ENCODE measurements at regions of chr11 and their contacts with region 1.

Region 1: DNA sequence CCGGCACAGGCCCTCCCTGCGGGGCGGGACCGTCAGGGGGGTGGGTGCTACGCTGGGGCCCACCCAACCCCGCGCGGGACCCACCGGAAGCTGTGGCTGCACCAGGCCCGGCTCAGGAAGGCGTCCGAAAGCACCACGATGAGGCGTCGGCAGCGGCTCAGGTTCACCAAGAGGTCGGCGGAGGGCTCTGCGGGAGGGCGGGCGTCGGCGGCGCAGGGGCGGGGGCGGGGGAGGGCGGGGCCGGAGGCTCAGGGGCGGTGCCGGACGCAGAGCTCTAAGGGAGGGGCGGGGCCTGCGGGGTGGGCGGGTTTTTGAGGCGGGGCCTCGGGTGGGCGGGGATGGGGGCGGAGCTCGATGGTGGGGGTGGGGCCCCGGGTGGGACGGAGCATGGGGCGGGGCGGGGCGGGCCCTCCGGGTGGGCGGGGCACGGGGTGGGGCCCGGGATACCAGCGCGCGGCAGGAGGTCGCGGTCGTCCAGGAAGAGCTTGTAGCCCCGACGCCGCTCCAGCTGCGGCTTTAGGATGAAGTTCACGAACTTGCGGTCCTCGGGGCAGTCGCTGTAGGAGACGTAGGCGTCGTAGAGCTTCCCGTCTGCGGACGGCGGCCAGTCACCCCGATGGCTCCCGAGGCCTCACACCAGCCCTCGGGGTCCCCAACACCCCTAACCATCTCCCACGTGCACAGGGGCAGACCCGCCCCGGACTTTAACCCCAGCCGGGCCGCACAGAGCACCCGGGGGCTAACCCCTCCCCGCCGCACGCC is 7.6 kb downstream of the SIGIRR start:
- DNase-seq: no peak
- ATAC-seq: no peak
- H3K4me3 ChIP-seq: no peak overlapping the region
- H3K27ac ChIP-seq: no peak overlapping the region
- H3K4me1 ChIP-seq: peaks cover 32% of the 10 kb centered on the region
- H3K27me3 ChIP-seq: no peaks in the 10 kb centered on the region
- CTCF ChIP-seq: no peak
- EP300 ChIP-seq: no peak
- POLR2A ChIP-seq: no peak
- RAD21 ChIP-seq: no peak

Region 2: GRCh38 chr11:420054-420910 is 13.1 kb after region 1 on chr11:
- CTCF ChIA-PET with region 1: no interaction called
- POLR2A ChIA-PET with region 1: no interaction called
- in situ Hi-C with region 1: no loop called
- intact Hi-C with region 1: no loop called
- DNase-seq: no peak
- ATAC-seq: no peak
- H3K4me3 ChIP-seq: no peak overlapping the region
- H3K27ac ChIP-seq: no peak overlapping the region
- H3K4me1 ChIP-seq: peaks cover 13% of the 10 kb centered on the region
- H3K27me3 ChIP-seq: peaks cover 2 to 7% of the 10 kb centered on the region in 2 experiments; a peak in 1 of 5 replicates
- CTCF ChIP-seq: no peak
- EP300 ChIP-seq: no peak
- POLR2A ChIP-seq: no peak
- RAD21 ChIP-seq: no peak

Region 3: DNA sequence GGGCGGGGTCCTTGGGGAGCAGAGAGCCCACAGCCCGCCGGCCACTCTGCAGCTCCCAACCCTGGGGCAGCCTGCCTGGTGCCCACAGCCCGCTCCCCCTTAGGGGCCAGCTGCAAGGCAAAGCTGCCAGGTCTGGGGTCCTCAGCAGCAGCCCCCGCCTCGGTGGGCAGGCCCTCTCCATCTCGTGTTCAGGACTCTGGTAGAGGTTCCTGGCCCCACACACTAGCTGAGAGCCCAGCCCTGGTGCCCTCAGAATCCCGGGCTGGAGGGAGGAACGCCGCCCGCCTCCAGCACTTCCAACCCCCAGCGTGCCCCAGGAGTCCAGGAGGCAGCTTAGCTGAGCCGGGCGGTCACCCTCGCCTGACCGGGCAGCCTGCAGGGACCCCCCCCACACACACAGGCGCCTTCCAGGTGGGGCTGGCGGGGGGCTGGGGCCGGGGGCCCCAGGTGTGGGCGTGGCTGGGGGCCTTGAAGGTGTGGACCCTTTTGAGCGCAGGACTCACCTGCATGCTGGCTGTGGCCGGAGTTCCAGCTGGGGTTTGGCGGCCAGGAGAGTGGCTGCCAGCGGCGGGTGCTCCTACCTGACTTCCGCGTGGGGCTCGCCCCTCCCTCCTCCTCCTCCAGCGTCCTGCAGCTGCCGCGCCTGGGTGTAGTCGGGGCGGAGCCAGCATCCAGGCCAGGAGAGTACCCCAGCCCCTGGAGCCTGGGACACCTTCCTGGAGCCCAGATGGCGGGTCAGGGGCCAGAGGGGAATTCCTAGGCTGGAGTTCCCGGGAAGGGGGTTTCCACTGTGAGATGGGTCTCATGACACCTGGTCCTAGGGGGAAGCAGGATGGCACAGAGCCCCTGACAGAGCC is 34.5 kb after region 1 on chr11 and contains the start of gene ANO9:
- CTCF ChIA-PET with region 1: no interaction called
- POLR2A ChIA-PET with region 1: interaction called, 31 read pairs
- in situ Hi-C with region 1: loop called (anchors 5 kb)
- intact Hi-C with region 1: loop called (anchors 5 kb)
- DNase-seq: peak; percentile 39
- ATAC-seq: peak; percentile 60
- H3K4me3 ChIP-seq: peak within 1 kb of the TSS; percentile 67 to 77 (median 75)
- H3K27ac ChIP-seq: no peak within 1 kb of the TSS
- H3K4me1 ChIP-seq: peaks cover 53% of the 10 kb centered on the region
- H3K27me3 ChIP-seq: no peaks in the 10 kb centered on the region
- CTCF ChIP-seq: no peak
- EP300 ChIP-seq: no peak
- POLR2A ChIP-seq: no peak
- RAD21 ChIP-seq: no peak
- total RNA-seq, gene ANO9: 1.5 and 8.9 TPM in 2 replicates

Region 4: DNA sequence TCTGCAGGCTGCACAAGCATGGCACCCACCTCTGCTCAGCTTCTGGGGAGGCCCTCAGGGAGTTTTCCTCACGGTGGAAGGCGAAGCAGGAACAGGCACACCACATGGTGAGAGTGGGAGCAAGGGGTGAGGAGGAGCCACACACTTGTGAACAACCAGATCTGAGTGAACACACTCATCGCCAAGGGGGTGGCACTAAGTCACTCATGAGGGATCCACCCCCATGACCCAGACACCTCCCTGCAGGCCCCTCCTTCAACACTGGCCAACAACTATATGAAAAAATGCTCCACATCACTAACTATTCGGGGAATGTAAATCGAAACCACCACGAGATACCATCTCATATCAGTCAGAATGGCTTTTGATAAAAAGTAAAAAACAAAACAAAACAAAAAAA is 1191.7 kb after region 1 on chr11:
- CTCF ChIA-PET with region 1: no interaction called
- POLR2A ChIA-PET with region 1: no interaction called
- in situ Hi-C with region 1: no loop called
- intact Hi-C with region 1: no loop called
- DNase-seq: no peak
- ATAC-seq: no peak
- H3K4me3 ChIP-seq: no peak overlapping the region
- H3K27ac ChIP-seq: no peak overlapping the region
- H3K4me1 ChIP-seq: peaks cover 11% of the 10 kb centered on the region
- H3K27me3 ChIP-seq: peaks cover 0 to 18% of the 10 kb centered on the region in 2 experiments; a peak in 3 of 5 replicates
- CTCF ChIP-seq: no peak
- EP300 ChIP-seq: no peak
- POLR2A ChIP-seq: no peak
- RAD21 ChIP-seq: no peak